ENCODE measurements at regions of chr6 and their contacts with region 1.

Region 1: DNA sequence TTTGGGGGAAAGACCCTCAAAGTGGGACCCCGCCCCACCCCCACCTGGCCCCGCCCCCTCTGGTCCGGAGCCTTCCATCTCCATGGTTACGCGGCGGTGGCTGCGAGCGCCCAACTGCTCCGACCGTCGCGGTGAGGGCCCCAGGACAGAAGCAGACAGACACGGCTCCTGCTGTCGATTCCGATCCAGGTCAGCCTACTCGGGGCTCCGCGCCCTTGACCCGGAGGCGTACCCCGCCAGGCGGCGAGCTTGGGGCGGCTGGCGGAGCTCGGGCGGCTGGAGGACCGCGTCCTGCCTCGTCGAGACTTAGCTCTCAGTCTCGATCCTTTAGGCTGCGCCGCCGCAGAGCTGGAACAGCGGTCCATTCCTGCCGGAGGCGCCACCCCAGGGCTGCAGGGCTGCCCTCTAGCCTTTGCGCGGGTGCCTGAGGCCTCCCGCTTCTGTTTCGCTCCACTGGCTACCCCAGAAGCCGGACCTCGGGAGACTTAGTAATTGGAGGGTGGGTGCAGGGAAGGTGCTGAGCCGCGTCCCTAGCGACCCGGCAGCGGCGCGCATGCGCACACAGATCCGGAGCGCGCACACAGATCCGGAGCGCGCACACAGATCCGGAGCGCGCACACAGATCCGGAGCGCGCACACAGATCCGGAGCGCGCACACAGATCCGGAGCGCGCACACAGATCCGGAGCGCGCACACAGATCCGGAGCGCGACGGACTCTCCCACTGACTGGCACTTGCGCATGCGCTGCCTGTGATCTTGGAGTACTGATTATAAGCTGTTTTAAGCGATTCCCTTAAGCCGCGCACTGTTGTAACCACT is at the start of gene CFAP206:
- DNase-seq: peak; percentile 95
- H3K4me3 ChIP-seq: peak within 1 kb of the TSS; percentile 87 to 97 (median 96)
- H3K27ac ChIP-seq: peak within 1 kb of the TSS; percentile 48
- H3K4me1 ChIP-seq: peaks cover 10% of the 10 kb centered on the region
- H3K27me3 ChIP-seq: peaks cover 0 to 5% of the 10 kb centered on the region in 2 experiments
- CTCF ChIP-seq: peak in 1 of 2 donors; percentile 15
- POLR2A ChIP-seq: no peak
- total RNA-seq, gene CFAP206: 0.20 and 0.21 TPM in 2 replicates

Region 2: GRCh38 chr6:87384449-87384848 is 23.7 kb before region 1 on chr6:
- CTCF ChIA-PET with region 1: no interaction called
- POLR2A ChIA-PET with region 1: no interaction called
- dilution Hi-C with region 1: no loop called
- intact Hi-C with region 1: no loop called
- DNase-seq: no peak
- H3K4me3 ChIP-seq: no peak overlapping the region
- H3K27ac ChIP-seq: no peak overlapping the region
- H3K4me1 ChIP-seq: no peaks in the 10 kb centered on the region
- H3K27me3 ChIP-seq: no peaks in the 10 kb centered on the region
- CTCF ChIP-seq: no peak
- POLR2A ChIP-seq: no peak

Region 3: DNA sequence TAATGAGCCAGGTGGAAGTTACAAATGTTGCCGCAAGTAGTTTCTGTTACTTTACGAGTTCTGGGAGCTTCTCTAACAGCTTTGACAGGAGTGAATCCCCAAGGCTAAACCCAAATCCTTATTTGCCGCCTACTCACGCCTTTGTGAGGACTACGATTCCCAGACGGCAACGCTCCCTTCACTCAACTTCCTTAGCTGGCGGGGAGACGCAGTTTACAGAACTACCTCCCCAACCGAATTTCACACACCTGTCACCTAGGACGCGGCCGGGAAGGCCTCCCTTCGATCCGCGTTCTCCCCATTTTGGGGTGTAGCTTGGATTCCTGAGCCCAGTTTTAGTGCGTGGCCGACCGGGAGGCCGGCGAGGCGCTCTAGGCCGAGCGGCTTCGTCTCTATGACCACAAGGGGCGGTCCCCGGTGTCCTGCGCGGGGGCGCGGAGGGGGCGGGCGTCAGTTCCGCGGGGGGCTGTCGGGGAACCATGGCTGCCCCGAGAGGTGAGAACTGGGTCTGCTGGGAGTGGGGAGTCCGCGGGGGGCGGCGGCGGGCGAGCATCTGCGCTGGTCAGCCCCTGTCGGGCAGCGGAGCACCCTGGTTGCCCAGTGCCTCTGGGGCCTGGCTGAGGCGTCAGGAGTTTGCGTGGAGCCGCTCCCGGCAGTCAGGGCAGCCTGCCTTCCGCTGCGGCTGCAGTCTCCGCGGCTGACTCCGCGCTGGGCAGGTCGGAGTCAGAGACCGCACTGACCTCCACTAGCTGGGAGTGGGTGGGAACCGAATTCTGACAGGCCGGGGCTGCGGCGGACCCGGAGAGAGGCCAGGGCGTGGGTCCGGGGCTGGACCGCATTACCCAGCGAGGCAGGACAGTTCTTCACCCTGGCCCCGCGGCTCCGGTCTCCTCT is 64.7 kb after region 1 on chr6 and contains the start of gene SLC35A1:
- CTCF ChIA-PET with region 1: no interaction called
- POLR2A ChIA-PET with region 1: no interaction called
- dilution Hi-C with region 1: no loop called
- intact Hi-C with region 1: loop called (anchors 2 kb)
- DNase-seq: peak; percentile 88
- H3K4me3 ChIP-seq: peak within 1 kb of the TSS; percentile 53 to 91 (median 90)
- H3K27ac ChIP-seq: peak within 1 kb of the TSS; percentile 91
- H3K4me1 ChIP-seq: peaks cover 8% of the 10 kb centered on the region
- H3K27me3 ChIP-seq: peaks cover 2% of the 10 kb centered on the region in 2 experiments
- CTCF ChIP-seq: no peak
- POLR2A ChIP-seq: peak; percentile 86
- total RNA-seq, gene SLC35A1: 12.9 and 13.0 TPM in 2 replicates

Region 4: GRCh38 chr6:87589693-87590549 is 181.8 kb after region 1 on chr6 and contains the starts of genes ORC3 and RARS2:
- CTCF ChIA-PET with region 1: no interaction called
- POLR2A ChIA-PET with region 1: no interaction called
- dilution Hi-C with region 1: no loop called
- intact Hi-C with region 1: loop called (anchors 2 kb)
- DNase-seq: peak; percentile 95
- H3K4me3 ChIP-seq: peak within 1 kb of the TSS; percentile 82 to 96 (median 94)
- H3K27ac ChIP-seq: peak within 1 kb of the TSS; percentile 53
- H3K4me1 ChIP-seq: peaks cover 16% of the 10 kb centered on the region
- H3K27me3 ChIP-seq: no peaks in the 10 kb centered on the region
- CTCF ChIP-seq: no peak
- POLR2A ChIP-seq: peak; percentile 78
- total RNA-seq, gene ORC3: 17.9 and 20.1 TPM in 2 replicates
- total RNA-seq, gene RARS2: 33.7 and 34.0 TPM in 2 replicates